A673 (cell line): ENCODE measurements at regions of chr19 and their contacts with region 1.

Region 1: GRCh38 chr19:24033301-24033962 is 53.6 kb upstream of the ZNF254 start:
- DNase-seq: peak; percentile 96
- H3K4me3 ChIP-seq: peak overlapping the region; percentile 87
- H3K27ac ChIP-seq: peak overlapping the region; percentile 95
- H3K4me1 ChIP-seq: no peaks in the 10 kb centered on the region
- H3K27me3 ChIP-seq: no peaks in the 10 kb centered on the region
- CTCF ChIP-seq: 0 out of 2 replicates have a peak, but pooled peaks have one; percentile 17

Region 2: GRCh38 chr19:23686621-23687423 is 346.6 kb before region 1 on chr19 and contains the start of gene ZNF675:
- CTCF ChIA-PET with region 1: no interaction called
- POLR2A ChIA-PET with region 1: interaction called, 3 read pairs
- intact Hi-C with region 1: loop called (anchors 10 kb)
- DNase-seq: peak; percentile 83
- H3K4me3 ChIP-seq: peak within 1 kb of the TSS; percentile 55
- H3K27ac ChIP-seq: peak within 1 kb of the TSS; percentile 61
- H3K4me1 ChIP-seq: no peaks in the 10 kb centered on the region
- H3K27me3 ChIP-seq: no peaks in the 10 kb centered on the region
- CTCF ChIP-seq: no peak
- total RNA-seq, gene ZNF675: 9.3 and 11.3 TPM in 2 replicates

Region 3: GRCh38 chr19:23957660-23958281 is 75.7 kb before region 1 on chr19:
- CTCF ChIA-PET with region 1: no interaction called
- POLR2A ChIA-PET with region 1: no interaction called
- intact Hi-C with region 1: no loop called
- DNase-seq: no peak
- H3K4me3 ChIP-seq: no peak overlapping the region
- H3K27ac ChIP-seq: no peak overlapping the region
- H3K4me1 ChIP-seq: no peaks in the 10 kb centered on the region
- H3K27me3 ChIP-seq: no peaks in the 10 kb centered on the region
- CTCF ChIP-seq: no peak

Region 4: DNA sequence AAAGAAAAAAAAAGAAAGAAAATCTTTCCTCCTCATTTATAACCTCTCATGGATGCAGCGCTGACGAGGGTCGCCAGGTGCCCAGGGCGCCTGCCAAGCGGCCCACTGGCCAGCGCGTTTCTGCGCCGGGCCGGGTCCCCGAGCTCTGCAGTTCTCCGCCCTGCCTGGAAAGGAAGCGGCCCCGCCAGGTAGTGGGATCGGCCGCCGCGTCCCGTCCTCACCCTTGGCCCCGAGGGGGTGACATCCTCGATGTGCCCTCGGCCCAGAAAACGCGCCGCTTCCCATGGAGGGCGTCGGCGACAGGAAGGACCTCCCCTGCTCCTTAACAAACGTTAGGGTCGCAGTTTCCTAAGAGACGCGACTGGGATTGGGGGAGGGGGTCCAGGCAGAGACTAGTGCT is 61.8 kb before region 1 on chr19:
- CTCF ChIA-PET with region 1: no interaction called
- POLR2A ChIA-PET with region 1: no interaction called
- intact Hi-C with region 1: no loop called
- DNase-seq: no peak
- H3K4me3 ChIP-seq: no peak overlapping the region
- H3K27ac ChIP-seq: no peak overlapping the region
- H3K4me1 ChIP-seq: no peaks in the 10 kb centered on the region
- H3K27me3 ChIP-seq: no peaks in the 10 kb centered on the region
- CTCF ChIP-seq: no peak